ENCODE measurements at regions of chr3 and their contacts with region 1.

Region 1: GRCh38 chr3:48034000-48034516 is 17.8 kb upstream of the MAP4 start:
- DNase-seq: peak in 1 of 2 experiments; percentile 89
- H3K4me3 ChIP-seq: no peak overlapping the region
- H3K27ac ChIP-seq: peak overlapping the region; percentile 64
- H3K4me1 ChIP-seq: peaks cover 24% of the 10 kb centered on the region
- H3K27me3 ChIP-seq: no peaks in the 10 kb centered on the region
- CTCF ChIP-seq: no peak

Region 2: GRCh38 chr3:47865192-47865591 is 168.9 kb before region 1 on chr3:
- CTCF ChIA-PET with region 1: interaction called, 14 read pairs
- POLR2A ChIA-PET with region 1: no interaction called
- intact Hi-C with region 1: no loop called
- DNase-seq: no peak
- H3K4me3 ChIP-seq: no peak overlapping the region
- H3K27ac ChIP-seq: no peak overlapping the region
- H3K4me1 ChIP-seq: no peaks in the 10 kb centered on the region
- H3K27me3 ChIP-seq: no peaks in the 10 kb centered on the region
- CTCF ChIP-seq: no peak